HEK293T (cell line): ENCODE measurements at regions of chr14 and their contacts with region 1.

Region 1: DNA sequence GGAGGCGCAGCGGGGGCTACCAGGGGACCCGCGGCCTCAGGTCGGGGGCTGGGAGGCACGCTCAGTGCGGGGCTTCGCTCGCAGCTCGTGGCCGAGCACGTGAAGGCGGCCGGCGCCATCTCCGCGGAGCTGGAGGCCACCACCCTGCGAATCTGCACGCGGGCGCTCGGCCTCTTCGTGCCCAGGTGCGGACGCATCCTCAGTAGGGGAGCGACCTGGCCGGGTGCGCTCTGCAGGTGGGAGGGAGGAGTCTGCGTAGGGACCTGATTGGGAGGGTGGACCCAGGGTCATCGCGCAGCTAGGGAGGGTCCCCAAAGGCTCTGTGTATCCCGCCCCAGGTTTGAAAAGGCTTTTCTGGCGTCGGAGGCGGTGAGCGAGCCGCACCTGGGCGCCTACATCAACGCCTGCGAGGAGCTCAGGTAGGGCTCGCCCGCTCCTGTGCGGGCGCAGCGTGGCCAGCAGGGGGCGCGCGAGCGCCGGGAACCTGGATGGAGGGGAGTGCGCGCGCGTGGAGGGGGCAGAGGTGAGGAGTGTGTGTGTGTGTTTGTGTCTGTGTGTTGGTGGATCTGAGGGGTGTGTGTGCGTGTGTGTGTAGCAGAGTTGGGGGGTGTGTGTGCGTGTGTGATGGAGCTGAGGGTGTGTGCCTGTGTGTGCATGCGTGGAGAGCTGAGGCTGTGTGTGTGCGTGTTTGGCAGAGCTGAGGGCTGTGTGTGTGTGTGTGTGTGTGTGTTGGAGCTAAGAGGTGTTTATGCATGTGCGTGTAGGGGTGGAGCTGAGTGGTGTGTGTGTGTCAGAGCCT is 10.3 kb downstream of the EXOC3L4 start:
- DNase-seq: peak; percentile 87

Region 2: GRCh38 chr14:103014466-103015319 is 90.2 kb before region 1 on chr14:
- CTCF ChIA-PET with region 1: no interaction called
- POLR2A ChIA-PET with region 1: no interaction called
- DNase-seq: no peak

Region 3: DNA sequence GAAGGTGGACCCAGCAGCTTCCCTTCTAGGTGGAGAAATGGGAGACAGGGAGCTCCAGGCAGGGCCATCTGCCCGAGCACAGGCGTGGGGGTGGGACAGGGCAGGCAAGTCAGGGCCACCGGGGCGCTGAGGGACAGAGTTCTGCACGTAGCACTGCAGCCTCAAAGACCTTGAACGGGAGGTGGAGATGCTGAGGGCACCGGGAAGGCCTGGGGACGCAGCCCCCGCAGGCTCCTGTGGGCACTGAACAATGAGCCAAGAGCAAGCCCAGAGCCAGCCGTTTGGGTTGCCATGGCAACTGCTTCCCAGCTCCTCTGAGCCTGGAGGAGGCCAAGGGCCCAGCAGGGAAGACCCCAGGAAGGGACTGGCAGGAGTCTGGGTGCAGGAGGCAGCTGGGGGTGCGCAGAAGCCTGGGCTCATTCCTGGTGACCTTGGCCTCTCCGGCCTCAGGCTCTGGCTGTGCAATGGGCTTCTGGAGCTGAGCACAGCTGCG is 17.5 kb before region 1 on chr14:
- CTCF ChIA-PET with region 1: interaction called, 10 read pairs
- POLR2A ChIA-PET with region 1: no interaction called
- DNase-seq: no peak

Region 4: GRCh38 chr14:103130965-103131364 is 26.1 kb after region 1 on chr14:
- CTCF ChIA-PET with region 1: interaction called, 15 read pairs
- POLR2A ChIA-PET with region 1: no interaction called
- DNase-seq: no peak

Region 5: GRCh38 chr14:103186909-103187586 is 82.2 kb after region 1 on chr14:
- CTCF ChIA-PET with region 1: interaction called, 10 read pairs
- POLR2A ChIA-PET with region 1: no interaction called
- DNase-seq: no peak

Region 6: DNA sequence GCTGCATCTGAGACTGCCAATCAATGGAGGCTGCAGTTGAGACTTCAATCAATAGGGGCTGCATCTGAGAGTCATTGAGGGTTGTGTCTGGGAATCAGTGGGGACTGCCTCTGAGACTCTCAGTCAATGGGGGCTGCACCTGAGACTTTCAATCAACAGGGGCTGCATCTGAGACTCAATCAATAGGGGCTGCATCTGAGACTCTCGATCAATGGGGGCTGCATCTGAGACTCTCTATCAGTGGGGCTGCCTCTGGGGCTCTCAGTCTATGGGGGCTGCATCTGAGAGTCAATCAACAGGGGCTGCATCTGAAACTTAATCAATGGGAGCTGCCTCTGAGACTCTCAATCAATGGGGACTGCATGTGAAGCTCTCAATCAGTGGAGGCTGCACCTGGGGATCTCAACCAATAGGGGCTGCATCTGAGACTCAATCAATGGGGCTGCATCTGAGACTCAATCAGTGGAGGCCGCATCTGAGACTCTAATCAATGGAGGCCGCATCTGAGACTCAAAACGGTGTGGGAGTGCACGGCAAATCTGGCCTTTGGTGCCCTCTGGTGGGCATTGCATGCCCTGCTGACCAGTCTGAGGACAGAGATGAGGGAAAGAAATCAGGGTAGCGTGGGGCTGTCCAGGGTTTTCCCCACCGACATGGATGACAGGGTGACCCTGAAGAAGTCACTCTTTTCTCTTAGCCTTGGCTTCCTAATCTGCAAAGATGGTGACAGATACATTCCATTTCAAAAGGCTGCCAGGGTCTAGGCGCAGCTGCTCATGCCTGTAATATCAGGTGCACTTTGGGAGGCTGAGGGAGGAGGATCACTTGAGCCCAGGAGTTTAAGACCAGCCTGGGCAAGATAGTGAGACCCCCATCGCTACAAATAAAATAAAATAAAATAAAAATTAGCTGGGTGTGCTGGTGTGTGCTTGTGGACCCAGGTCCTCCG is 187.8 kb after region 1 on chr14:
- CTCF ChIA-PET with region 1: interaction called, 36 read pairs
- POLR2A ChIA-PET with region 1: interaction called, 3 read pairs
- DNase-seq: peak; percentile 82